ENCODE measurements at regions of chr15 and their contacts with region 1.

Region 1: DNA sequence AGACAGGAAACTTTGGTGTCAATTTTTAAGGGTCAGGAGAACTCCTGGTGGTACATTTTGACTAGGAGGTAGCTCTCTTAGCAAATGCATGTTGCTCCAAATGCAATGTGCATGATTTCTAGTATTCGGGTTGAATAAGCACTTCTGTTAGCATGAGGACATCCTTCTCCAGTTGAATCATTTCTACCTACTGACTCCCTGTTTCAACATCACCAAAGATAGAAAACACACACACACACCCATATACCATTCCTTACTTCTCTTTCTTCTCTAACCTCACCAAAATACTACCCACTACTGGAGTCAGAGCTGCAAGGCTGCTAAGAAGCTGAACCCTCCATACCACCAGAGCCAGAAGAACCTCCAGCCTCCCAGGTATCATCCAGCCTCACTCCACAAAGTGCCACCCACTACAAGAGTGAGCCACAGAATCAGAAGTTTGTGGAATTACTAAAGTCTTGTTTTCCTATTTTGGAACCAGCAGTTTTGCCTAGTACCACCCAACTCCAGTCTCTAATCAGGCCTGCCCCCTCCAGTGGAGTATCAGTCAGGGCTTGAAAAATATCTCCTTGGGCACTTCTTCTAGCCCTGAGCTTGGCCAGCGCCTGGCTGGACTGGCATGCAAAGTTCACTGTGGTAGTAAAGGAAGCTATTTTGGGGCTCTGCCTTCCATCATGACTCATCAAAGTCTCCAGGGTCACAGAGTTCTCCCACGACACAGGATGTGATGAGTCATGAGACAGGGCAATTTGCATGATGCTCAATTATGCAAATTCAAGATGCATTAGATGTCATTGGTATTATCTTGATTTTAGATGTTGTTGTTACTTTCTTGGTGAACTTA is 110.2 kb downstream of the CYP19A1 start:
- DNase-seq: no peak
- H3K4me3 ChIP-seq: no peak overlapping the region
- H3K27ac ChIP-seq: peak overlapping the region in 1 of 2 experiments; percentile 56; a peak in 2 of 4 replicates
- H3K4me1 ChIP-seq: peaks cover 3 to 11% of the 10 kb centered on the region in 2 experiments; a peak in 2 of 4 replicates
- H3K27me3 ChIP-seq: no peaks in the 10 kb centered on the region
- CTCF ChIP-seq: no peak
- EP300 ChIP-seq: no peak
- RAD21 ChIP-seq: no peak

Region 2: DNA sequence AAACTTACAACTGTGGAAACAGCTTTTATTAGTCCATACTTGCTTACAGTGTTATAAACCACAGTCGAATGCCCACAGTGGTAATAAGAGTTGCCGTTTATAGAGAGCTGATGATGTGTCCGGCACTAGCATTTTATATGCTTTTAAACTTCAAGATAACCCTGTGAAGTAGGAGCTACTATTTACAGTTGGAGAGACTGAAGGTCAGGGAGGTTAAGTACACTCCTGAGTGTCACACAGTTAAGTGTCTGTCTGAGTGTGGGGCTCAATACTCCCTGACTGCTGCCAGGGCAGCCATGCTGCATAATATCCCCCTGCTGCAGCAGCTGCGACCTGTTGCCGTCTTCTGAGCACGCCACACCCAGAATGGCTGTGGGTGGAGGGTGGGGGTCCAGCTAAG is 43.5 kb before region 1 on chr15:
- CTCF ChIA-PET with region 1: no interaction called
- POLR2A ChIA-PET with region 1: no interaction called
- DNase-seq: no peak
- H3K4me3 ChIP-seq: no peak overlapping the region
- H3K27ac ChIP-seq: no peak overlapping the region
- H3K4me1 ChIP-seq: no peaks in the 10 kb centered on the region
- H3K27me3 ChIP-seq: peaks cover 23% of the 10 kb centered on the region; the same call in 1 of the 2 replicates
- CTCF ChIP-seq: no peak
- EP300 ChIP-seq: no peak
- RAD21 ChIP-seq: no peak

Region 3: DNA sequence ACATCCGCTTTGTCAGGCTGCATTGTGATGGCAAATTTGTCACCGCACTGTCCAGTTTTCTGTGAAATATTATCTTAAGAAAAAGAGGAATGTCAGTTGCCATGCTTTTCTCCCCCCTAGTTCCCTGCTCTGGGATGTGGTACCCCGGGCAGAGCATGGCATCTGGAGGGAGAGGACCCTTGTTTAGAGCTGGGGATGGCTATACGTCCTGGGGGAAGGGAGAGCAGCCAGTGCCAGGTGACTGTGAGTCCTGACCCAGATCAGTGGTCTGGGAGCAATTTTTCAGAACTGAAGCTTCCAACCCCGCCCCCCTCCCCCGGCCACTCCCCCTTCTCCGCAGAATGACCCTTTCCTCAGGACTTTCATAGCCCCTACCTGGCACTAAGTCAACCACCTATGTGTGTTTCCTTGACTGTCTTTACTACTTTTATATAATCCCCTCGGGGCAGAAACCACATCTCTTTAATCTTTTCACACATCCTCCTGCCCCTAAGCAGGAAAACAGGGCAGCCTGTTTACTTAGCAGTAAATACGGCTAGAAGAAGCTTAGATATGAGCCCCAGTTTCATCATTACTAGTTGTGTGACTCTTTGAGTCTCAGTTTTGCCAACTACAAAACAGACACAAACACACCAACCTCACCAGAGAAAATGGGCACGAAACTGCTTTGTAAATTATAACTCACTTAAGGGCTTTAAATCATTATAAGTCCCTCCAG is 11.7 kb after region 1 on chr15:
- CTCF ChIA-PET with region 1: interaction called, 25 read pairs
- POLR2A ChIA-PET with region 1: no interaction called
- DNase-seq: peak; percentile 27
- H3K4me3 ChIP-seq: no peak overlapping the region
- H3K27ac ChIP-seq: no peak overlapping the region
- H3K4me1 ChIP-seq: peaks cover 0 to 3% of the 10 kb centered on the region in 2 experiments; a peak in 2 of 4 replicates
- H3K27me3 ChIP-seq: peaks cover 5% of the 10 kb centered on the region; the same call in 1 of the 2 replicates
- CTCF ChIP-seq: no peak
- EP300 ChIP-seq: no peak
- RAD21 ChIP-seq: no peak

Region 4: DNA sequence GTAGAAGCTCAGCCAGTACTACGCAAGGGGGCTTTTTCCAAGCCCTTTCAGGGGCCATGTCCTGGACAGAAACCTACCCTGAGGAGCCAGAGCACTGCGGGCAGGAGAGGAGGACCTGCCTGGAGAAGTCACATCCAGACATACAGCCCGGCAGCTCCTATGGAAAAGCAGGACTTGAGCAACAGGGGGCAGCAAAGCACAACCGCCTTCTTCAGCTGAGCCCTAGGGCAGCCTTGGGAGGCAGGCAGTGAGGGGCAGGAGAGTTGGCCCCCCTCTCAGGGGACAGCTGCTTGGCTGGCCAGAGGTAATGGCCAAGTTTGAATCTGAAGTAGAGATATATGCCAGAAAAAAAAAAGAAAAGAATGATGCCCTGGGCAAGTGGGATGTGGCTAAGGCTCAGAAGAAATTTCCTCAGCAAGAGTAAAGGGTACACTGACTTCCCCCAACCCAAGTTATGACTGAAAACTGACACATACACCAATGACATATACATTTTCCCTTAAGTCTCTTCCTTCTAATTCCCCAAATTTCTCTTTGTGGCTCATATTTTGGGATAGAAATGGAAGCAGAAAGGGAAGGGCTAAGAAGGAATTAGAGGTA is 53.3 kb after region 1 on chr15:
- CTCF ChIA-PET with region 1: interaction called, 15 read pairs
- POLR2A ChIA-PET with region 1: no interaction called
- DNase-seq: peak; percentile 60
- H3K4me3 ChIP-seq: no peak overlapping the region; a peak in 1 of 4 replicates
- H3K27ac ChIP-seq: no peak overlapping the region
- H3K4me1 ChIP-seq: peaks cover 0 to 8% of the 10 kb centered on the region in 2 experiments; a peak in 1 of 4 replicates
- H3K27me3 ChIP-seq: peaks cover 21% of the 10 kb centered on the region; the same call in 1 of the 2 replicates
- CTCF ChIP-seq: peak; percentile 52
- EP300 ChIP-seq: no peak
- RAD21 ChIP-seq: peak; percentile 70